ENCODE measurements at regions of chr18 and their contacts with region 1.

Region 1: GRCh38 chr18:27378431-27379095 is 193.5 kb upstream of the CHST9 start:
- DNase-seq: no peak
- H3K4me3 Mint-ChIP-seq: peak overlapping the region; percentile 53
- H3K27ac Mint-ChIP-seq: peak overlapping the region; percentile 86
- H3K4me1 Mint-ChIP-seq: peaks cover 30% of the 10 kb centered on the region
- H3K27me3 Mint-ChIP-seq: no peaks in the 10 kb centered on the region

Region 2: DNA sequence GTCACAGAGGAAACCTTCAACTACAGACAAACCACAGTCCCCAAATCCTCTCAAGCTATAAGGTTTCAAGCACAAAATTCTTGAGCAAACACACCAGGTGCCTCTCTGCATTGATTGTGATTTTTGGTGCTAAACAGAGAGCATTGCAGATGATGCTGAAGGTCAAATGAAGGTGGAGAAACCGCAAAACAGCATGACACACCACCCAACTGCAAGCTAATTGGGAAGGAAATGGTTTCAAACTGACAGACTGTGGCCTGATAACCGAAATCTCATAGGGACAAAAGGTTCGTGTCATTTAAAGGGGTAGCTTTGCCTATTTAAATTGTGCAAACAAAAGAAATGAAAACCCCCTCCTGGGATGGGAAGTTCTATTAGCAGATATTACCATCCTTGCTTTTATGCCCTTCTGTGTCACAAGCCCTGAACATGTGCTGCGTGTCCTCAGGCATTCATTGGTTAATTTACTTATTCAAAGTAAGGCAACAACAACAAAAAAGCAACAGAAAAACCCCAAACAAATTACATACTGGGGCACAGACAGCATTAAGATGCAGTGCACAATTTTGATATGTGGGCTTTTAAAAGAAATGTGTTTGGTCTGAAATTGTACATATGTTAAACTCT is 668.0 kb before region 1 on chr18:
- intact Hi-C with region 1: loop called (anchors 5 kb)
- DNase-seq: peak; percentile 14
- H3K4me3 Mint-ChIP-seq: no peak overlapping the region
- H3K27ac Mint-ChIP-seq: no peak overlapping the region
- H3K4me1 Mint-ChIP-seq: peaks cover 25% of the 10 kb centered on the region
- H3K27me3 Mint-ChIP-seq: peaks cover 13% of the 10 kb centered on the region

Region 3: DNA sequence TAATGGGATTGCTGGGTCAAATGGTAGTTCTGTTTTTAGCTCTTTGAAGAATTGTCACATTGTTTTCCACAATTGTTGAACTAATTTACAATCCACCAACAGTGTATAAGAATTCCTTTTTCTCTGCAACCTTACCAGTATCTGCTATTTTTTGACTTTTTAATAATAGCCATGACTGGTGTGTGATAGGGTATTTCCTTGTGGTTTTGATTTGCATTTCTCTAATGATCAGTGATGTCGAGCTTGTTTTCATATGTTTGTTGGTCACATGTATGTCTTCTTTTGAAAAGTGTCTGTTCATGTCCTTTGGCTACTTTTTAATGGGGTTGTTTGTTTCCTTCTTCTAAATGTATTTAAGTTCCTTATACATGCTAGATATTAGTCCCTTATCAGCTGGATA is 476.1 kb after region 1 on chr18:
- intact Hi-C with region 1: loop called (anchors 5 kb)
- DNase-seq: no peak
- H3K4me3 Mint-ChIP-seq: no peak overlapping the region
- H3K27ac Mint-ChIP-seq: no peak overlapping the region
- H3K4me1 Mint-ChIP-seq: no peaks in the 10 kb centered on the region
- H3K27me3 Mint-ChIP-seq: no peaks in the 10 kb centered on the region

Measured in activated T-helper 1 cell treated with anti-CD3 and anti-CD28 coated beads, Interleukin-12 subunit alpha, Interleukin-12 subunit beta, Interleukin-2, Interleukin-4 antibody, amounts not matched to agents 30 ng/mL and 10 ng/mL and 1 ng/mL, durations not matched to agents 14 hours and 24 hours and 36 hours (primary cell).